MCF 10A (cell line): ENCODE measurements at regions of chr20 and their contacts with region 1.

Region 1: DNA sequence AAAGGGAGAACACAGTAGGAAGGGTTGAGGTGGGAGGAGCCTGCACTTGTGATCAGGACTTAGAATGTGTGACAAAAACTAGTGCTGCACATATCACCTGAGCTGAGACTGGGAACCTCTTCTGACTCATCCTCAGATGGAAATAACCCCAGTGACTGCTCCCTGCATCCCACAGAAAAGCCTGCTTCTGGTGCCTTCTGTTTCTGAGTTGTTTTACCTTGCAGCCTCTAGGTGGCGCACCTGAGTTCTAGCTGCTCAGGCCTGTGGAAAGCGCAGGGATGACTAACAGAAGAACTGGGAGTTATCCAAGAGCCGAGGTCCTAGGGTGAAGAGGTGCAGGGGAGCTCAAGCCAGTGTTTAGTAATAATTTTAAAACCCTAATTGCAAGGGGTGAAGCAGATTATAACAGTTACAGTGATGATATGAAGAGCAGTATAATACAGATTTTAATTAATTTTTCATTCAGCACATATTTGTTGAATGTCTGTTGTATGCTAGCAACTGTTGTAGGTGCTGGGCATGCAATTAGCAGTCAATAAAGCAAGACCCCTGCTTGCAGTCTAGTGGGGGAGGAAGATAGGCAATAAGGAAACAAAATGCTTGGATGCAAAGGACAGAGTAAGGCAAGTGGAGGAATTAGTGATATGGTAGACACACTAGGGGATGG is 302.5 kb downstream of the DHX35 start:
- DNase-seq: peak; percentile 86
- H3K4me3 Mint-ChIP-seq: no peak overlapping the region
- H3K27ac Mint-ChIP-seq: no peak overlapping the region
- H3K4me1 Mint-ChIP-seq: peaks cover 19% of the 10 kb centered on the region
- H3K27me3 Mint-ChIP-seq: no peaks in the 10 kb centered on the region
- CTCF ChIP-seq: peak; percentile 87

Region 2: DNA sequence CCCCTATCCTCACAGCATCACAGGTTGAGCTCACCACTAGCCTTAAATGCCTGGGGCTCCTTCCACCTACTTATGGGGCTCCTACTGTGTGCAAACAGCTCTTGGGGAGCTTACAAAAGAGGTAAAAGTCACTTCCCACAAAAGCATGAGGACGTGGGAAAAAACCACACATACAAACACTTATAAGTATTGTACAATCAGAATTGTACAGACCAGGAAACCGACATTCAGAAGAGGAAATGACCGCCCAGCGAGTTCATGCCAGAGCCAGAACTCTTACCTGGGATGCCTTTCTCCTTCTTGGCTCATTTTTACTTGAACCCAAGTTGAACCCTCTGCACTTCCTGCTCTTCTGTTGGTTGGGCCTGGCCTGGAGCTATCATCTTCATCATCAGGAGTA is 465.4 kb before region 1 on chr20:
- CTCF ChIA-PET with region 1: no interaction called
- POLR2A ChIA-PET with region 1: no interaction called
- intact Hi-C with region 1: no loop called
- DNase-seq: no peak
- H3K4me3 Mint-ChIP-seq: no peak overlapping the region
- H3K27ac Mint-ChIP-seq: no peak overlapping the region
- H3K4me1 Mint-ChIP-seq: no peaks in the 10 kb centered on the region
- H3K27me3 Mint-ChIP-seq: no peaks in the 10 kb centered on the region
- CTCF ChIP-seq: no peak

Region 3: GRCh38 chr20:39124064-39124463 is 140.6 kb before region 1 on chr20:
- CTCF ChIA-PET with region 1: interaction called, 153 read pairs
- POLR2A ChIA-PET with region 1: no interaction called
- intact Hi-C with region 1: no loop called
- DNase-seq: peak; percentile 45
- H3K4me3 Mint-ChIP-seq: no peak overlapping the region
- H3K27ac Mint-ChIP-seq: no peak overlapping the region
- H3K4me1 Mint-ChIP-seq: peaks cover 6% of the 10 kb centered on the region
- H3K27me3 Mint-ChIP-seq: peaks cover 12% of the 10 kb centered on the region
- CTCF ChIP-seq: no peak

Region 4: DNA sequence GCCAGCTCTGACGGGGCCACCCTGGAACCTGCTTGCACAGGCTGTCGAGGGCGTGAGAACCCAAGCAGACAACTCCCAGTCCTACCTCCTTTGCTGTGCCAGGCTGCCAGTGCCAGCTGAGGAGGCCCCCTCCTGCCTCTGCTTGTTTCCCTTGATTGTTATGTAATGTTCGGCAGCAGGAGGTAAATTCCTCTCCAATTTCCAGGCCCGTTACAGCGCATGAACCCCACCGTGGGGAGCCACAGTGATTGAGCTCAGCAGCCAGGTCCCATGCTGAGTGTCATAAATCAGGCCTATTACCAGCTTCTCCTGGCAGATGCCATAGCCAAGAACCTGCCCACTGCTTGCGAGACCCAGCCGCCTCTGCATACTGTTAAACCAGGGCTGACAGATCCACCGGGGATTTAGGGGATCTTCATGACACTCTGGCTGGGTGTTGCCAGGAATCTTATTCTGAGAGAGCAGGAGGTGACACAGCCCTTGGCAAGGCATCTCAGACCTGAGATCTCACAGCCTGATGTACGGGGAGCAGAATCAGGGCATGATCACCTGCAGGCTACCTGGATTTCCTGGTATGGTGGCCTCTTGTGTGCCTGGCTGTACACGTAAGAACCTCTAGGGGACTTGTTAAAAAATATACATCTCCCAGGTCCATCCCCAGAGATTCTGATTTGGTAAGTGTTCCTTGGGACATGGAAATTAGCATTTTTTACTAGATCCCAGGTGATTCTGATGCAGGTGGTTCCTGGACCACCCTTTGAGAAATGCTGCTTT is 18.2 kb after region 1 on chr20:
- CTCF ChIA-PET with region 1: interaction called, 20 read pairs
- POLR2A ChIA-PET with region 1: no interaction called
- intact Hi-C with region 1: no loop called
- DNase-seq: no peak
- H3K4me3 Mint-ChIP-seq: no peak overlapping the region
- H3K27ac Mint-ChIP-seq: no peak overlapping the region
- H3K4me1 Mint-ChIP-seq: no peaks in the 10 kb centered on the region
- H3K27me3 Mint-ChIP-seq: peaks cover 11% of the 10 kb centered on the region
- CTCF ChIP-seq: no peak

Region 5: GRCh38 chr20:39576771-39577170 is 312.1 kb after region 1 on chr20:
- CTCF ChIA-PET with region 1: no interaction called
- POLR2A ChIA-PET with region 1: no interaction called
- intact Hi-C with region 1: no loop called
- DNase-seq: no peak
- H3K4me3 Mint-ChIP-seq: no peak overlapping the region
- H3K27ac Mint-ChIP-seq: no peak overlapping the region
- H3K4me1 Mint-ChIP-seq: no peaks in the 10 kb centered on the region
- H3K27me3 Mint-ChIP-seq: no peaks in the 10 kb centered on the region
- CTCF ChIP-seq: no peak

Region 6: DNA sequence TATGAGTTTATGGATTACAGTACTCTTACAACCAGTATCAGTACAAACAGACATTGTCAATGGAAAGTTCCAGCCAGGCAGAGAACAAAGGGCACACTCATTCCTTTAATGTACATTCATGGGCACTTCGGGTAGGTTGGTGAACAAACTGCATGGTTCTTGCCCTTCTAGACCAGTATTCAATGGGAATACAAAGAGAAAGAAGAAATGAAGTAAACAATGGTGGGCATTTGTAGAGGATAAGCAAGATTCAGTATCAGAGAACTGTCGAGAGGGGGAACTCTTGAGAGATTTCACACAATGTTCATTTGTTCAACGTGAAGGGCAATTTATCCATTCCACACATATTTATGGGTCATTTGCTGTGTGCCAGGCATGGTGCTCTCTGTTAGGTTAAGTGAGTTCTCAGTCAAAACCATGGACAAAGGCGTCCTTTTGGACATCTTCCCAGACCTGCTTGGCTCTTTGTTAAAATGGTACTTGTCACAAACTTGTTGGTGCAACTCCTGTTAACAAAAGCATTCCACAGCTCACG is 412.3 kb after region 1 on chr20:
- CTCF ChIA-PET with region 1: interaction called, 5 read pairs
- POLR2A ChIA-PET with region 1: no interaction called
- intact Hi-C with region 1: loop called (anchors 1 kb)
- DNase-seq: peak; percentile 47
- H3K4me3 Mint-ChIP-seq: no peak overlapping the region
- H3K27ac Mint-ChIP-seq: no peak overlapping the region
- H3K4me1 Mint-ChIP-seq: no peaks in the 10 kb centered on the region
- H3K27me3 Mint-ChIP-seq: no peaks in the 10 kb centered on the region
- CTCF ChIP-seq: peak; percentile 50

Region 7: GRCh38 chr20:39713076-39713840 is 448.6 kb after region 1 on chr20:
- CTCF ChIA-PET with region 1: no interaction called
- POLR2A ChIA-PET with region 1: no interaction called
- intact Hi-C with region 1: no loop called
- DNase-seq: no peak
- H3K4me3 Mint-ChIP-seq: no peak overlapping the region
- H3K27ac Mint-ChIP-seq: no peak overlapping the region
- H3K4me1 Mint-ChIP-seq: no peaks in the 10 kb centered on the region
- H3K27me3 Mint-ChIP-seq: no peaks in the 10 kb centered on the region
- CTCF ChIP-seq: no peak

Region 8: GRCh38 chr20:39885975-39886649 is 621.5 kb after region 1 on chr20:
- CTCF ChIA-PET with region 1: interaction called, 8 read pairs
- POLR2A ChIA-PET with region 1: no interaction called
- intact Hi-C with region 1: loop called (anchors 5 kb)
- DNase-seq: peak; percentile 80
- H3K4me3 Mint-ChIP-seq: no peak overlapping the region
- H3K27ac Mint-ChIP-seq: no peak overlapping the region
- H3K4me1 Mint-ChIP-seq: peaks cover 9% of the 10 kb centered on the region
- H3K27me3 Mint-ChIP-seq: no peaks in the 10 kb centered on the region
- CTCF ChIP-seq: peak; percentile 58

Region 9: GRCh38 chr20:40956542-40957264 is 1692.1 kb after region 1 on chr20:
- CTCF ChIA-PET with region 1: interaction called, 52 read pairs
- POLR2A ChIA-PET with region 1: no interaction called
- intact Hi-C with region 1: loop called (anchors 5 kb)
- DNase-seq: no peak
- H3K4me3 Mint-ChIP-seq: no peak overlapping the region
- H3K27ac Mint-ChIP-seq: no peak overlapping the region
- H3K4me1 Mint-ChIP-seq: peaks cover 6% of the 10 kb centered on the region
- H3K27me3 Mint-ChIP-seq: no peaks in the 10 kb centered on the region
- CTCF ChIP-seq: no peak